ENCODE measurements at regions of chr3 and their contacts with region 1.

Region 1: DNA sequence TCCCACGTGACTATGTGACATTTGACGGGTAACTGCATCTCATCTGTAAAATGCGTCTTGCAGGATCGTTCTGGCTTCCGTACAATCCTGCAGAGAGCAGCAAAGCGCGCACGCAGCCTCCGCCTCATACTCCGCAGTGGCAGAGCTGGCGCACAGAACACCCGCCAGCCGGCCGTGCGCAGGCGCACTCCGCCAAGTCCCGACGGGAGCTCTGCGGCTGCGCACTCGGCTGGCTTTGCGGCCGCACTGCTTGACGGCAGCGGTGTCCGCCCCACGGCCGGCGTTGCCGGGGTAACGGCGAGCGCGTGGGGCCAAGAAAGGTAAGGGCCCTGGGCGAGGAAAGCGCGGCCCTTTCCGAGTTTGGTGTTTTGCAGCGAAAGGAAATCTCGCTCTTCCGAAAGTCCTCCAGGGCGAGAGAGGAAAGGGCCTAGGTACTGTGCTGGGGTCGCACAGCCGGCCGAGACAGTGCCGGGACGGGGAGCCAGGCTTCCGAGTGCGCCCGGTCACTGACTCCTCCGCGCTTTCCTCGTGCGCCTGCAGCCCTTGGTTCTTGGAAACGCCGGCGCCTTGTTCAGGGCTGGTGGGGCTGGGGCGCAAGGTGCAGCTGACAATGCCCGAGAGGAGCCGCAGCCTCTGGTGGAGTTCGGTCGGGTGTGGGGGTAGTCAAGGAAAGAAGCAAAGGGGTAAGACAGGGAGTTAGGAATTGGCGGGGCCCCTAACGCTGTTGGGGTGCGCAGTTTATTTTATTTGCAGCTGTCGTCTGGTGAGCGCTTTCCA is at the start of gene TSEN2:
- DNase-seq: no peak
- H3K4me3 ChIP-seq: peak within 1 kb of the TSS; percentile 70
- H3K27me3 ChIP-seq: no peaks in the 10 kb centered on the region
- CTCF ChIP-seq: peak; percentile 41
- polyA plus RNA-seq, gene TSEN2: 8.0 and 9.2 TPM in 2 replicates

Region 2: GRCh38 chr3:12135029-12135657 is 349.2 kb before region 1 on chr3:
- CTCF ChIA-PET with region 1: interaction called, 411 read pairs
- POLR2A ChIA-PET with region 1: no interaction called
- DNase-seq: no peak
- H3K4me3 ChIP-seq: no peak overlapping the region
- H3K27me3 ChIP-seq: peaks cover 6% of the 10 kb centered on the region; the same call in 1 of the 2 replicates
- CTCF ChIP-seq: peak; percentile 94

Region 3: DNA sequence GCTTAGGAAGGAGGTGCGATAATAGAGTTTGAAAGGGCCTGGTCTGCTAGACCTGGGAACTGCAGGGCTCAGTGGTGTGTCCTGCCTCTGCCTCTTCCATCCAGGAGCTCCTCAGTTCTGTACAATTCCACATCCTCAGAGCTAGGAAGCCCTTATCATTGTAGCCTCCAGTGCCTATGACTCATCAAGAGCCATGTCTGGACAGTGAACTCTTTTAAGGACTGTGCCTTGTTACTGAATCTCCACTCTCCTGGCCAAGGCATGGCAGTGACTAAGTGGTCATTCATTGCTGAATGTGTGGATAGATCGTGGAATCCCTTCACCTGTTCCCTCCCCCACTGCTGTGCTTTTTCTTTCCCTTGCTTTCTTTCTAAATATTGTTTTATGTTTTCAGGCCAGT is 328.6 kb before region 1 on chr3:
- CTCF ChIA-PET with region 1: interaction called, 11 read pairs
- POLR2A ChIA-PET with region 1: no interaction called
- DNase-seq: no peak
- H3K4me3 ChIP-seq: no peak overlapping the region
- H3K27me3 ChIP-seq: peaks cover 6% of the 10 kb centered on the region
- CTCF ChIP-seq: no peak

Region 4: DNA sequence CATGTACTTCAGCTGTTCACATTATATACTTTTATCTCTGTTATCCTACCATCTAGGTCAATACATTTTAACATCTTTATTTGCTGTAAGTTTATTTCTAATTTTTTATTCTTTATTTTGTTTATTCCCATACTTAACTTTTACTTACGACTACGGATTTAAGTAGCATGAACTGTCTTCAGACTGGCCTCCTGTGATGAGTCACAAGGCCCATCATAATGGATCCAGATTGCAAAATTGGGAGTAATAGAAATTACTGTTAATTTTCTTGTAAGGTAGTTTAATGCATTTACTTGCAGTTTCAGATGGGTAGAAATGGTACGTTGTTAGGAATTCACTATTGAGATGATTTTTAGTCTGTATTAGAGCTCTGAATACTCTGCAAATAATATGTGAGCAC is 149.6 kb before region 1 on chr3:
- CTCF ChIA-PET with region 1: no interaction called
- POLR2A ChIA-PET with region 1: no interaction called
- DNase-seq: no peak
- H3K4me3 ChIP-seq: no peak overlapping the region
- H3K27me3 ChIP-seq: no peaks in the 10 kb centered on the region
- CTCF ChIP-seq: no peak

Region 5: DNA sequence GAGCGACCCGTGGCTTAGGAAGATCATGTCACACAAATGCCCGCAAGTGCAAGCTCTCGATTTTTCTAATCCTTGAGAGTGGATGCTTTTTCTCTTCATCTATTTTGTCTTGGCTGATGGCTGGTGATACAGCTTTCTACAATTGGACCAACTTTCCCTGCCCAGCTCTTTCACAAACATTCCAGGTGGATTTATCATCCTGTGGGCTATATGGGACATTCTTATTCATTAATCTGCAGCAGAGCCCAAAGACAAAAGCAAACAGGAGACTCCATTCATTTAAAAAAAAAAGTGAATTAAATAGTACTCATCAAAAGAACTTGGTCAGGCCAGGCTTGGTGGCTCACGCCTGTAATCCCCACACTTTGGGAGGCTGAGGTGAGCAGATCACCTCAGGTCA is 14.3 kb before region 1 on chr3:
- CTCF ChIA-PET with region 1: interaction called, 11 read pairs
- POLR2A ChIA-PET with region 1: no interaction called
- DNase-seq: no peak
- H3K4me3 ChIP-seq: no peak overlapping the region
- H3K27me3 ChIP-seq: no peaks in the 10 kb centered on the region
- CTCF ChIP-seq: no peak

Region 6: GRCh38 chr3:12518261-12519028 is 34.1 kb after region 1 on chr3:
- CTCF ChIA-PET with region 1: no interaction called
- POLR2A ChIA-PET with region 1: no interaction called
- DNase-seq: no peak
- H3K4me3 ChIP-seq: no peak overlapping the region
- H3K27me3 ChIP-seq: no peaks in the 10 kb centered on the region
- CTCF ChIP-seq: no peak

Region 7: DNA sequence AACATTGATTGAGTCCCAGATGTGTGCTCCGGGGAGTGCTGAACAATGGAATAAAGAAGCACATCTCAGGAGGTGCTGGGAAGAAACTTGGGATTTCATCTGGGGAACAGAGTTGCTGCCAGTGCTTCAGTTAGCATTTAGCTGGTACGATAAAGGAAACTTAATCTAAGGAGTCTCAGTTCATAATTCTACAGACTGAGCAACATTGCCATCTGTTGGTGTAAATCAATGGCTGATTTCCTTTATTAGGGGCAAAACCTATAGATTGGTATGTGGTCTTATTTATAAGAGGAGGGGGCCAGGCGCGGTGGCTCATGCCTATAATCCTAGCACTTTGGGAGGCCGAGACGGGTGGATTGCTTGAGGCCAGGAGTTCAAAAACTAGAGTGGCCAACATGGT is 52.0 kb after region 1 on chr3:
- CTCF ChIA-PET with region 1: interaction called, 14 read pairs
- POLR2A ChIA-PET with region 1: no interaction called
- DNase-seq: no peak
- H3K4me3 ChIP-seq: no peak overlapping the region
- H3K27me3 ChIP-seq: no peaks in the 10 kb centered on the region; the same call in 1 of the 2 replicates
- CTCF ChIP-seq: peak; percentile 30; the same call in 1 of the 2 replicates